Natural killer cell (primary cell): ENCODE measurements at regions of chr7 and their contacts with region 1.

Region 1: DNA sequence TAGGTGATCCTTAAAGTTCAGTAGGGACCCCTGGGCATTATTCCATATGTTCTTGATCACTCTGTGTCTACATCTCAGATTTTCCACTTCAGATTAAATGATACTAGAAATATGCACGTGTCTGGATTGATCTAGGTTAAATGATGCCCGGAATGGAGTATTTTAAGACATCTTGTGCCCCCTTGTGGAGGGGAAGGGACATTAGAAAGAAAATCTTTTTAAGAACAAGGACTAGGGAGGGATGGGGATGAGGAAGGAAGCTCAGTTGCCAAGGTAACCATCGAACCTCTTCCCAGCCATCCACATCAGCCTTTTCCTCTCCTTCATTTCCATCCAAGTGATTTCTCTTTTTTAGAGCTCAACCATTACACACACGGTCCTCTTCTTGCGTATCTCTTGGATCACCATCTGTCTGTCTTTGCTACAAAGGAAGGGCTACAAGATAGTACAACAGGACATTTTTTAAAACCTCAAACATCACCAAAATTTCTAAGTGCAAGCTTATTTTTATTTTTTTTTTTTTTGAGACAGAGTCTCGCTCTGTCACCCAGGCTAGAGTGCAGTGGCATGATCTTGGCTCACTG is 40.5 kb downstream of the PRSS2 start:
- DNase-seq: peak in 1 of 2 donors; percentile 88
- ATAC-seq: no peak
- H3K4me3 ChIP-seq: no peak overlapping the region
- H3K4me3 Mint-ChIP-seq: peak overlapping the region; percentile 64
- H3K27ac ChIP-seq: peak overlapping the region; percentile 98
- H3K27ac Mint-ChIP-seq: peak overlapping the region; percentile 92 to 100
- H3K4me1 ChIP-seq: peaks cover 50% of the 10 kb centered on the region
- H3K4me1 Mint-ChIP-seq: peaks cover 52% of the 10 kb centered on the region in 2 donors
- H3K27me3 ChIP-seq: no peaks in the 10 kb centered on the region
- H3K27me3 Mint-ChIP-seq: no peaks in the 10 kb centered on the region
- CTCF ChIP-seq: peak; percentile 82

Region 2: DNA sequence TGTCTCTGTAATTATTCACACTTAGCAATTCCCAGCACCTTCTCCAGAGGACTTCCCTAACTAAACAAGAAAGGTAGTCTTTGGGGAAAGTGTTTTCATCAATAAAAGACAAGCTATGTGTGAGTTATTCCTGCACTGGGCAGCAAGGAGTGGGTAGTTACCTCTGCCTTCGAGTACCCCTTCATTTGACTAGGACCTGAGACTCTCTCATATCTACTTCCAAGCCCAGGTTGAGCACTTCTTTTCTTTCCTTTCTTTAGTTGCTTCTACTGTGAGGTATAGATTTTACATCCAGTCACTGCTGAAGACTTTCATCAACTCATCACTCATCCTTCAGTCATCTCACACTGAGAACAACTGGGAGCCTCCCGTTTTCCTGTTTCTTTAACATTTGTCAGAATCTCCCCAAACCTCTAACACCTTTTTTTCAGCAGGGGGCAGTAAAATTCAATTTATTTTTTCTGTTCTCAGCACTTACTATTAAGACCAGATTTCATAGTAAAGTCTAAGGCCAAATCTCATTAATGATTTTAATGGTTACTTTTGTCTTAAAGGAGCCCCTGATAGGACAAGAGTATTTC is 142.1 kb before region 1 on chr7:
- intact Hi-C with region 1: loop called (anchors 1 kb)
- DNase-seq: peak in 1 of 2 donors; percentile 58
- ATAC-seq: peak in 2 of 3 donors; percentile 71 to 72
- H3K4me3 ChIP-seq: no peak overlapping the region
- H3K4me3 Mint-ChIP-seq: no peak overlapping the region
- H3K27ac ChIP-seq: no peak overlapping the region
- H3K27ac Mint-ChIP-seq: peak overlapping the region; percentile 12 to 57
- H3K4me1 ChIP-seq: peaks cover 9% of the 10 kb centered on the region
- H3K4me1 Mint-ChIP-seq: peaks cover 22 to 27% of the 10 kb centered on the region in 2 donors
- H3K27me3 ChIP-seq: no peaks in the 10 kb centered on the region
- H3K27me3 Mint-ChIP-seq: no peaks in the 10 kb centered on the region
- CTCF ChIP-seq: peak; percentile 77

Region 3: DNA sequence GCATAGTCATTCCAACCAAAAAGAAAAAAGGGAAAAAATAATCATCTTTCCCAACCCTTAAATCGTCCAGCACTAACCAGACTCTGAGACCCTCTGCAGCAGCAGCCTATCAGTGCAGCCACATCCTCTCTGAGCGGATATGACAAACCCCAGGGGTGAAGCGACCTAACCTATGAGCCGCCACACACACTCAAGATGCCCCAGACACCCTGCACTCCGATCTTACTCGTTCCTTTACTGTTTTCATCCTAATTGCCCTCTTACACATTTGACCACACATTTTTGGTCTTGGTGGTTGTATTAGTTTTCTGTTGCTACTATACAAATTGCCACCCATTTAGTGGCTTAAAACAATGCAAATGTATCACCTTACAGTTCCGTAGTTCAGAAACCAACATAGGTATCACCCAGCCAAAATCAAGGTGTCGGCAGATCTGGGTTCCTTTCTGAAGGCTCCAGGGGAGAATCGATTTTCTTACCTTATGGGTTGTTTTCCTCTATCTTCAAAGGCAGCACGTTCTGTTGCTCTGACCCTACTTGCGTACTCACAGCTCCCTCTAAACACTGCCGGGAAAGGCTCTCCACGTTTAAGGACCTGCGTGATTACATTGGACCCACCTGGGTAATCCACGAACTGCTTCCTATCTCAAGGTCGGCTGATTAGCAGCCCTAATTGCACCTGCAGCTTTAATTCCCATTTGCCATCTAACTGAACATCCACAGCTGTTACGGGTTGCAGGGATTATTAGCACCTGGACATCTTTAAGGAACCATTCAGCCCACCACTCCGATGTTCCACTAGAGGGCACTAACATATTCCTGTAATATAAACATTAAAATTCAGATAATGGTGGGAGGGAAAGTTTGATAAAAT is 99.3 kb before region 1 on chr7:
- intact Hi-C with region 1: loop called (anchors 2 kb)
- DNase-seq: peak; percentile 33 to 66
- ATAC-seq: peak; percentile 79 to 88 (median 80)
- H3K4me3 ChIP-seq: peak overlapping the region; percentile 22
- H3K4me3 Mint-ChIP-seq: peak overlapping the region; percentile 91
- H3K27ac ChIP-seq: peak overlapping the region; percentile 76
- H3K27ac Mint-ChIP-seq: peak overlapping the region; percentile 91 to 92
- H3K4me1 ChIP-seq: peaks cover 50% of the 10 kb centered on the region
- H3K4me1 Mint-ChIP-seq: peaks cover 73 to 87% of the 10 kb centered on the region in 2 donors
- H3K27me3 ChIP-seq: no peaks in the 10 kb centered on the region
- H3K27me3 Mint-ChIP-seq: no peaks in the 10 kb centered on the region
- CTCF ChIP-seq: peak; percentile 73

Region 4: GRCh38 chr7:142782922-142783900 is 28.0 kb before region 1 on chr7:
- intact Hi-C with region 1: loop called (anchors 1 kb)
- DNase-seq: peak; percentile 88 to 91
- ATAC-seq: peak; percentile 54 to 81 (median 66)
- H3K4me3 ChIP-seq: peak overlapping the region; percentile 45
- H3K4me3 Mint-ChIP-seq: peak overlapping the region; percentile 90
- H3K27ac ChIP-seq: peak overlapping the region; percentile 62
- H3K27ac Mint-ChIP-seq: peak overlapping the region; percentile 92 to 100
- H3K4me1 ChIP-seq: peaks cover 46% of the 10 kb centered on the region
- H3K4me1 Mint-ChIP-seq: peaks cover 64 to 81% of the 10 kb centered on the region in 2 donors
- H3K27me3 ChIP-seq: no peaks in the 10 kb centered on the region
- H3K27me3 Mint-ChIP-seq: no peaks in the 10 kb centered on the region
- CTCF ChIP-seq: peak; percentile 93

Region 5: GRCh38 chr7:142898377-142899170 is 87.3 kb after region 1 on chr7:
- intact Hi-C with region 1: no loop called
- DNase-seq: no peak
- ATAC-seq: no peak
- H3K4me3 ChIP-seq: no peak overlapping the region
- H3K4me3 Mint-ChIP-seq: no peak overlapping the region
- H3K27ac ChIP-seq: no peak overlapping the region
- H3K27ac Mint-ChIP-seq: no peak overlapping the region
- H3K4me1 ChIP-seq: no peaks in the 10 kb centered on the region
- H3K4me1 Mint-ChIP-seq: no peaks in the 10 kb centered on the region
- H3K27me3 ChIP-seq: no peaks in the 10 kb centered on the region
- H3K27me3 Mint-ChIP-seq: peaks cover 0 to 23% of the 10 kb centered on the region in 2 donors
- CTCF ChIP-seq: no peak